H1 (cell line): ENCODE measurements at regions of chr16 and their contacts with region 1.

Region 1: GRCh38 chr16:67372664-67373063 is 20.6 kb downstream of the TPPP3 start:
- DNase-seq: no peak
- H3K4me3 ChIP-seq: no peak overlapping the region
- H3K27ac ChIP-seq: no peak overlapping the region
- H3K4me1 ChIP-seq: no peaks in the 10 kb centered on the region
- H3K27me3 ChIP-seq: peaks cover 0 to 5% (median 0%) of the 10 kb centered on the region in 4 experiments; a peak in 3 of 7 replicates
- CTCF ChIP-seq: peak in 2 of 3 experiments; percentile 28 to 35; a peak in 2 of 4 replicates
- EP300 ChIP-seq: no peak
- POLR2A ChIP-seq: no peak
- RAD21 ChIP-seq: peak; percentile 51 to 57

Region 2: GRCh38 chr16:67349172-67349571 is 23.5 kb before region 1 on chr16:
- CTCF ChIA-PET with region 1: interaction called, 13 read pairs
- POLR2A ChIA-PET with region 1: interaction called, 3 read pairs
- DNase-seq: no peak
- H3K4me3 ChIP-seq: no peak overlapping the region
- H3K27ac ChIP-seq: no peak overlapping the region
- H3K4me1 ChIP-seq: no peaks in the 10 kb centered on the region
- H3K27me3 ChIP-seq: 0 out of 7 replicates have a peak, but pooled peaks cover 0 to 2% (median 0%) of the 10 kb centered on the region in 4 experiments
- CTCF ChIP-seq: no peak
- EP300 ChIP-seq: no peak
- POLR2A ChIP-seq: no peak
- RAD21 ChIP-seq: no peak

Region 3: DNA sequence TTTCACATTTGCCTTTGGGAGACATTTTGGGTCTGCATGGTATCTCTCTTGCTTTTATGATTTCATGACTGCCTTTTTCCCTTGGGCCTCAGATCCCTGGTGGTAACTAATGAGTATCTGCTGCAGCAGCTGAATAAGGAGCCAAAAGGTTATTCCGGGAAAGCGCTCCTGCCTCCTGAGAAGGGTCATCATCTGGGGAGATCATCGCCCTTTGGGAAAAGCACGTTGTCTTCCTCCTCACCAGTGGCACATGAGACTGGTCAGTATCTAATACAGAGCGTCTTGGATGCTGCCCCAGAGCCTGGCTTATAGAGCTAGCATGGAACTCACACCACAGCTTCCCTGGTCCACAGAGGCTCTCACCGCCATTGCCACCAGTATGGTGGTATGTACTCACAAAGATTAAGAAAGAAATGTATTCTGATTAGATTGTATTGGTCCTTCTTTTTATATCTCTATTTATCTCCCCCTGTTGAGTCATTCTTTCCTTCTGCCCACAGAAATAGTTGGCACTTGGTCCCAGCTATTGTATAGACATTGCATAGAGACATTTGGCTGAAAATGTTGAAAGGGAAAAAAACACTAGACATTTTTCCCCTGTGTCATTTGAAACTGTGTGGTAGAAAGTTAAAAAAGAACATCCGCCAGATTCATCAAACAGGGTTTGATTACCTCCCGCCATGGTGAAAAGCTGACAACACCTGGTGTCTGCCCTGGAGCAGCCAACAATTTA is 12.3 kb after region 1 on chr16:
- CTCF ChIA-PET with region 1: interaction called, 22 read pairs
- POLR2A ChIA-PET with region 1: no interaction called
- DNase-seq: no peak
- H3K4me3 ChIP-seq: no peak overlapping the region
- H3K27ac ChIP-seq: no peak overlapping the region
- H3K4me1 ChIP-seq: peaks cover 0 to 12% (median 4%) of the 10 kb centered on the region in 4 experiments; a peak in 5 of 7 replicates
- H3K27me3 ChIP-seq: peaks cover 0 to 3% (median 0%) of the 10 kb centered on the region in 4 experiments; a peak in 1 of 7 replicates
- CTCF ChIP-seq: no peak
- EP300 ChIP-seq: no peak
- POLR2A ChIP-seq: no peak
- RAD21 ChIP-seq: no peak